GM12878 (cell line): ENCODE measurements at regions of chr2 and their contacts with region 1.

Region 1: DNA sequence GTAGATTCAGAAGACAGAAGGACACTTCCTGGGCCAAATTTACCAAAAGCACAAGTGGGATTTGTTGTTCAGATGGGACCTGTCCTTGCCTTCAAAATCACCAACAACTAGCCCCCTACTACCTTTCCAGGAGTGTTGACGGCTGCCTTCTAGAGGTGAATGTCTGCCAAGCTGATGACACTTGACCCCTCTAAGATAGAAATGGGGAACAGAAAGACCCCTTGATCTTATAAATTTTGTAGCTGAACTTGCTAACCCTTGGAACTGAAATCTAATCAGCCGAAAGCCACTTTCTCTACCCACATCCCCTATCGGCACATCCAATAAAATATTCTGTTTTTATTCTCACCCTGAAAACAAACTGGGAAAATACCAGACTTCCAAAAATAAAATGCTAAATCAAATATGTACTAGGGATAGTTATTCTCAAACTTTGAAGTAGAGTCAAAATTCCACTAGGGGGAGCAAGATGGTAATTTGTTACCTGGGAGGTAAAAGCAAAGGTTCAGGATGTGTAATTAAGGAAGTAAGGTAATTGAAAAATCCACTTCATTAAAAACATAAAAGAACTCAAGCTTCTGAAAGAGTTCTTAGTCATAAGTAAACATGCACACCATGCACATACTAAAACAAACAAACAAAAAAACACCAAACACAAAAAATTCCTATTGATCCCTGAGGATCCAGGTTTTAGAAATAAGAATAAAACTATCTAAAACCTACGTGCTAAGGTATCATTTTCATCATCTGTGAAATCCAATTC is 119.2 kb downstream of the ANKRD44 start:
- DNase-seq: no peak
- ATAC-seq: peak; percentile 81
- H3K4me3 ChIP-seq: no peak overlapping the region
- H3K27ac ChIP-seq: peak overlapping the region; percentile 17; the same call in 1 of the 2 replicates
- H3K4me1 ChIP-seq: peaks cover 16% of the 10 kb centered on the region; the same call in 1 of the 2 replicates
- H3K27me3 ChIP-seq: no peaks in the 10 kb centered on the region
- CTCF ChIP-seq: peak; percentile 57 to 69 (median 61)
- EP300 ChIP-seq: no peak
- POLR2A ChIP-seq: no peak
- RAD21 ChIP-seq: peak; percentile 91

Region 2: GRCh38 chr2:197130318-197130717 is 61.0 kb before region 1 on chr2:
- CTCF ChIA-PET with region 1: interaction called, 11 read pairs
- POLR2A ChIA-PET with region 1: interaction called, 4 read pairs
- RAD21 ChIA-PET with region 1: interaction called, 4 read pairs
- SMC1A ChIA-PET with region 1: interaction called, 9 read pairs
- in situ Hi-C with region 1: no loop called
- intact Hi-C with region 1: no loop called
- DNase-seq: peak; percentile 77
- ATAC-seq: peak; percentile 87
- H3K4me3 ChIP-seq: peak overlapping the region; percentile 43; the same call in 1 of the 2 replicates
- H3K27ac ChIP-seq: peak overlapping the region; percentile 86
- H3K4me1 ChIP-seq: peaks cover 29% of the 10 kb centered on the region
- H3K27me3 ChIP-seq: no peaks in the 10 kb centered on the region
- CTCF ChIP-seq: no peak
- EP300 ChIP-seq: no peak; a peak in 1 of 4 replicates
- POLR2A ChIP-seq: no peak
- RAD21 ChIP-seq: no peak

Region 3: GRCh38 chr2:197168705-197169104 is 22.7 kb before region 1 on chr2:
- CTCF ChIA-PET with region 1: interaction called, 25 read pairs
- POLR2A ChIA-PET with region 1: no interaction called
- RAD21 ChIA-PET with region 1: interaction called, 4 read pairs
- SMC1A ChIA-PET with region 1: interaction called, 7 read pairs
- in situ Hi-C with region 1: no loop called
- intact Hi-C with region 1: no loop called
- DNase-seq: no peak
- ATAC-seq: peak; percentile 99
- H3K4me3 ChIP-seq: no peak overlapping the region
- H3K27ac ChIP-seq: no peak overlapping the region
- H3K4me1 ChIP-seq: peaks cover 10% of the 10 kb centered on the region
- H3K27me3 ChIP-seq: no peaks in the 10 kb centered on the region
- CTCF ChIP-seq: peak; percentile 68 to 76 (median 74)
- EP300 ChIP-seq: no peak
- POLR2A ChIP-seq: no peak
- RAD21 ChIP-seq: peak; percentile 82

Region 4: DNA sequence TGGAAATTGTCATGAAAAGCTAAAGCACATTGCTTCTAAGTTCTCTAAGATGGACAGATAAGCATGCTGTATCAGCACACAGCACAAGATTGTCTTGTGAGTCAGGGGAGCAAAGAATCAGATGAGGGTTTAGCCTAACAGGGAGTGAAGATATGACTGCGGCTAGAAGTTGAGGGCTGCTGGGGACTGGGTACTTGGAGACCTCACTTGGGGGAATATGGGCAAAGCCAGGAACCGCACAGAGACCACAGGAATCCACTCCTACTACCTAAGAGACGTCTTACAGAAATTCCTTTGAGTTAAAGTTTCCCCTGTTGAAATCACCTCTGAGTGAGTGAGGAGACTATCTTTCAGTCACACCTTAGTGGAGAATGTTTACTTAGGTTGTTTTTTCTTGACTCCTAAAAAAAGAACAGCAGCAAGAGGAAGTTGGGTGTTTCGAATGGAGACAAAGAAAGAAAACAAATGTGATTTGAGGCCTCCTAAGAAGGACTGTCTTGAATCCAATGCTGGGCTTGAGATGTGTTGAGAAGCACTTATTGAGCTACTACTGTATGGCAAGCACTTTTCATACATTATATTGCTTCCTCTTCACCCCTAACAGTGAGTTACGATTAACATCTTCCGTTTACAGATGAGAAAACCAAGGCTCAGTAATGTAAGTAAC is 18.5 kb after region 1 on chr2:
- CTCF ChIA-PET with region 1: interaction called, 37 read pairs
- POLR2A ChIA-PET with region 1: interaction called, 6 read pairs
- RAD21 ChIA-PET with region 1: interaction called, 127 read pairs
- SMC1A ChIA-PET with region 1: interaction called, 33 read pairs
- in situ Hi-C with region 1: no loop called
- intact Hi-C with region 1: no loop called
- DNase-seq: peak; percentile 76
- ATAC-seq: peak; percentile 47
- H3K4me3 ChIP-seq: peak overlapping the region; percentile 28
- H3K27ac ChIP-seq: peak overlapping the region; percentile 97
- H3K4me1 ChIP-seq: peaks cover 94% of the 10 kb centered on the region
- H3K27me3 ChIP-seq: no peaks in the 10 kb centered on the region
- CTCF ChIP-seq: no peak
- EP300 ChIP-seq: peak in 1 of 2 experiments; percentile 21; a peak in 2 of 4 replicates
- POLR2A ChIP-seq: no peak
- RAD21 ChIP-seq: no peak

Region 5: GRCh38 chr2:197248623-197249022 is 57.3 kb after region 1 on chr2:
- CTCF ChIA-PET with region 1: interaction called, 9 read pairs
- POLR2A ChIA-PET with region 1: no interaction called
- RAD21 ChIA-PET with region 1: interaction called, 5 read pairs
- SMC1A ChIA-PET with region 1: interaction called, 61 read pairs
- in situ Hi-C with region 1: no loop called
- intact Hi-C with region 1: no loop called
- DNase-seq: no peak
- ATAC-seq: peak; percentile 45
- H3K4me3 ChIP-seq: no peak overlapping the region
- H3K27ac ChIP-seq: peak overlapping the region; percentile 76
- H3K4me1 ChIP-seq: peaks cover 19% of the 10 kb centered on the region
- H3K27me3 ChIP-seq: no peaks in the 10 kb centered on the region
- CTCF ChIP-seq: no peak
- EP300 ChIP-seq: no peak
- POLR2A ChIP-seq: no peak
- RAD21 ChIP-seq: no peak

Region 6: GRCh38 chr2:197322724-197323720 is 131.7 kb after region 1 on chr2:
- CTCF ChIA-PET with region 1: interaction called, 10 read pairs
- POLR2A ChIA-PET with region 1: interaction called, 6 read pairs
- RAD21 ChIA-PET with region 1: interaction called, 4 read pairs
- SMC1A ChIA-PET with region 1: interaction called, 17 read pairs
- in situ Hi-C with region 1: no loop called
- intact Hi-C with region 1: no loop called
- DNase-seq: no peak
- ATAC-seq: peak; percentile 52
- H3K4me3 ChIP-seq: peak overlapping the region; percentile 32; the same call in 1 of the 2 replicates
- H3K27ac ChIP-seq: 0 out of 2 replicates have a peak overlapping the region, but pooled peaks have one; percentile 7
- H3K4me1 ChIP-seq: peaks cover 18% of the 10 kb centered on the region; the same call in 1 of the 2 replicates
- H3K27me3 ChIP-seq: no peaks in the 10 kb centered on the region
- CTCF ChIP-seq: no peak
- EP300 ChIP-seq: no peak
- POLR2A ChIP-seq: peak; percentile 51
- RAD21 ChIP-seq: no peak